ENCODE measurements at regions of chr12 and their contacts with region 1.

Region 1: GRCh38 chr12:109804820-109805761 is 28.1 kb downstream of the TRPV4 start:
- DNase-seq: peak; percentile 75 to 91
- ATAC-seq: peak; percentile 84
- H3K4me3 ChIP-seq: no peak overlapping the region
- H3K27ac ChIP-seq: no peak overlapping the region
- H3K4me1 ChIP-seq: no peaks in the 10 kb centered on the region
- H3K27me3 ChIP-seq: no peaks in the 10 kb centered on the region

Region 2: GRCh38 chr12:109844983-109845823 is 40.1 kb after region 1 on chr12:
- intact Hi-C with region 1: loop called (anchors 2 to 5 kb)
- DNase-seq: peak; percentile 92 to 97
- ATAC-seq: peak; percentile 96
- H3K4me3 ChIP-seq: no peak overlapping the region
- H3K27ac ChIP-seq: no peak overlapping the region
- H3K4me1 ChIP-seq: no peaks in the 10 kb centered on the region
- H3K27me3 ChIP-seq: no peaks in the 10 kb centered on the region

Measured in aorta (tissue), 5 donors.